ENCODE measurements at regions of chr12 and their contacts with region 1.

Region 1: GRCh38 chr12:67996347-67996746 is 7.1 kb downstream of the IFNG-AS1 start:
- DNase-seq: no peak
- ATAC-seq: no peak
- H3K4me3 ChIP-seq: no peak overlapping the region
- H3K27ac ChIP-seq: no peak overlapping the region
- H3K4me1 ChIP-seq: no peaks in the 10 kb centered on the region
- H3K27me3 ChIP-seq: no peaks in the 10 kb centered on the region
- CTCF ChIP-seq: no peak

Region 2: GRCh38 chr12:66453844-66454243 is 1542.5 kb before region 1 on chr12:
- intact Hi-C with region 1: loop called in 1 of 2 experiments (anchors 5 kb)
- DNase-seq: no peak
- ATAC-seq: no peak
- H3K4me3 ChIP-seq: no peak overlapping the region
- H3K27ac ChIP-seq: no peak overlapping the region
- H3K4me1 ChIP-seq: no peaks in the 10 kb centered on the region
- H3K27me3 ChIP-seq: no peaks in the 10 kb centered on the region
- CTCF ChIP-seq: no peak

Measured in psoas muscle (tissue), 8 donors.